Activated T-helper 2 cell treated with anti-CD3 and anti-CD28 coated beads, Interferon-gamma antibody, Interleukin-2, Interleukin-4, amounts not matched to agents 10 μg/mL and 5 μg/mL and 100 μg/mL, durations not matched to agents 14 hours and 24 hours and 36 hours (primary cell): ENCODE measurements at regions of chr14 and their contacts with region 1.

Region 1: DNA sequence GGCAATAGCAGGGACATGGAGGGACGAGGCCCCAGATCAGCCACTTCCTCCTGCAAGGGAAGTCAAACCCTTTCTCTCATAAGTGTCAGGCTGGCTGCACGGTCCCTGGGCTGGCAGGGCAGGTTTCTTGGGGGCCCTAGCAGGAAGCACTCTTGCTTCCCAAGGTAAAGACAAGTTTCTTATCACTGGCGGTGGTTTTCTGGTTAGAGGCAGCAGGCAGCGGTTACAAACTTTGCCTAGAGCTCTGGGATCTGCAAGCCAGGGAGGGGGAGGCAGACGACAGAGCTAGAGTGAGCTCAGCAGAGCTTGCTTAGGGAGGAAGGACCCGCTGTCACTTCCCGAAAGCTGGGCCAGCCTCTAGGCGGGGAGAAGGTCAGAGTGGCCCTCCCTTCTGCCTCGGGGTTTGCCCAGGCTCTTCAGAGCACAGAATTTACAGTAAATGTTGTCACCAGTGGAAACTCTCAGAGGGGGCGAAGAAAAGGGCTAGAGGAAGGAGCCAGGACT is 20.4 kb downstream of the BATF start:
- DNase-seq: peak; percentile 73
- H3K4me3 Mint-ChIP-seq: peak overlapping the region; percentile 61
- H3K27ac Mint-ChIP-seq: peak overlapping the region; percentile 97
- H3K4me1 Mint-ChIP-seq: peaks cover 57% of the 10 kb centered on the region
- H3K27me3 Mint-ChIP-seq: no peaks in the 10 kb centered on the region

Region 2: GRCh38 chr14:75476274-75476995 is 66.2 kb before region 1 on chr14:
- intact Hi-C with region 1: no loop called
- DNase-seq: no peak
- H3K4me3 Mint-ChIP-seq: no peak overlapping the region
- H3K27ac Mint-ChIP-seq: no peak overlapping the region
- H3K4me1 Mint-ChIP-seq: no peaks in the 10 kb centered on the region
- H3K27me3 Mint-ChIP-seq: peaks cover 10% of the 10 kb centered on the region

Region 3: DNA sequence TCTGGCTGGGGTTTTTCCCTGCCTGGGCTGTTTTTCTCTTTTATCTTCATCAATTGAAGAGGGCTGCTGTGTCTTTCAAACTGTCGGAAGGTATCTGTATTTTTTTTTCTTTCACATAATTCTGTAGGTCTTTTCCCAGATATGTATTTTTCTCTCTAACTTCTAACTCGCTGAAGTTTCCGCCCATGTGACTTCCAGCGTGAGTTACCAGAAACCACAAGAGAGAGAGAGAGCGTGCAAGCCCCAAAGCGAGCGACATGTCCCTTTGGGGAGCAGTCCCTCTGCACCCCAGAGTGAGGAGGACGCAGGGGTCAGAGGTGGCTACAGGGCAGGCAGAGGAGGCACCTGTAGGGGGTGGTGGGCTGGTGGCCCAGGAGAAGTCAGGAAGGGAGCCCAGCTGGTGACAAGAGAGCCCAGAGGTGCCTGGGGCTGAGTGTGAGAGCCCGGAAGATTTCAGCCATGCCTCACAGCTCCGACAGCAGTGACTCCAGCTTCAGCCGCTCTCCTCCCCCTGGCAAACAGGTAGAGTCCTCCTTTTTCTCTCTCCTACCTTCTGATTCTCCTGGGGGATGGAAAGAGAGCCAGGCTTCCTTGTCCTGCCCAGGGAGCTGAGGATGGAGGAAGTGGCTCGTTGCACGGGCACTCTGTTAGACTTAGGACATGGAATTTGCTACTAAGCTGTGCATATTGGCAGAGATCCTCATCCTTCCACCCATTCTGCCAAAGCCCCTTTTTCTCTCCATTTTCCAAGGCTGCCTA is 20.2 kb before region 1 on chr14 and contains the start of gene BATF:
- intact Hi-C with region 1: loop called (anchors 1 kb)
- DNase-seq: peak; percentile 76
- H3K4me3 Mint-ChIP-seq: peak within 1 kb of the TSS; percentile 100
- H3K27ac Mint-ChIP-seq: peak within 1 kb of the TSS; percentile 99
- H3K4me1 Mint-ChIP-seq: peaks cover 66% of the 10 kb centered on the region
- H3K27me3 Mint-ChIP-seq: no peaks in the 10 kb centered on the region
- total RNA-seq, gene BATF: 152 and 154 TPM in 2 replicates

Region 4: GRCh38 chr14:75560962-75561432 is 18.4 kb after region 1 on chr14:
- intact Hi-C with region 1: loop called (anchors 1 kb)
- DNase-seq: no peak
- H3K4me3 Mint-ChIP-seq: no peak overlapping the region
- H3K27ac Mint-ChIP-seq: peak overlapping the region; percentile 89
- H3K4me1 Mint-ChIP-seq: peaks cover 63% of the 10 kb centered on the region
- H3K27me3 Mint-ChIP-seq: no peaks in the 10 kb centered on the region

Region 5: DNA sequence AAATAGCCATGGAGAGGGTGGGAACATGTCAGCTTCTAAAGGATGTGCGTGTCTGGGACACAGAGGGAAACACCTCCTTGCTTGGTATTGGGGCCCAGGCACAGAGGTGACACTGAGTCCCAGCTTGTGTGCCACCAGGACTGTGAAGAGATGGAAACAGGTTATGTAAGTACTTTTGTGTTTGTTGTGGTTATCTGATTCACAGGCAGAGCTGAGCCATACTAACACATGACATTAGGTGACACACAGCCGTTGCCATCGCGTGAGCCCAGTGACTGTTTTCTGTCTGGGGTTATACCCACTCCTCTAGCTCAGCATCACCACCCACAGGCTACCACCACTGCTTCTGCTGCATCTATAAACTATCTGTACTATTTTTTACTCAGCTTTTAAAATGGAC is 23.7 kb after region 1 on chr14:
- intact Hi-C with region 1: loop called (anchors 1 kb)
- DNase-seq: peak; percentile 72
- H3K4me3 Mint-ChIP-seq: peak overlapping the region; percentile 47
- H3K27ac Mint-ChIP-seq: peak overlapping the region; percentile 85
- H3K4me1 Mint-ChIP-seq: peaks cover 65% of the 10 kb centered on the region
- H3K27me3 Mint-ChIP-seq: no peaks in the 10 kb centered on the region